ENCODE measurements at regions of chr20 and their contacts with region 1.

Region 1: DNA sequence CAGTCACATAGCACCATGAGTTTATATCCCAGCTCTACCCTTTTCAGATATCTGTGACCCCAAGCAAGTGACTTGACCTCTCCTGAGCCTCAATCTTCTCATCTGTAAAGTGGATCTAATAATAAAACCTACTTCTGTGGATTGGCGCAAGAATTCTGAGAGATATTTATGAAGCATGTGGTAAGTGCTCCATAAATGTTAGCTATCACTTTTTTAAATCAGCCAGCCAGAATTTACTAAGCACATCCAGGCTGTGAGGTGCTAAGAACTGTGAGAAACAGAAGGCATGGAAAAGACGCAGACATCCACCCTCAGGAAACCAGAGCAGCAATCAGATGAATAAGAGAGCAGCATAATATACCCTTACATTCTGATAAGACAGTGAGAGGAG is 862 bp downstream of the C20orf96 start:
- DNase-seq: no peak
- H3K4me3 ChIP-seq: peak overlapping the region; percentile 66
- H3K27ac ChIP-seq: peak overlapping the region in 1 of 2 donors; percentile 11
- H3K4me1 ChIP-seq: no peaks in the 10 kb centered on the region
- H3K27me3 ChIP-seq: no peaks in the 10 kb centered on the region
- CTCF ChIP-seq: no peak
- EP300 ChIP-seq: no peak
- POLR2A ChIP-seq: no peak

Region 2: DNA sequence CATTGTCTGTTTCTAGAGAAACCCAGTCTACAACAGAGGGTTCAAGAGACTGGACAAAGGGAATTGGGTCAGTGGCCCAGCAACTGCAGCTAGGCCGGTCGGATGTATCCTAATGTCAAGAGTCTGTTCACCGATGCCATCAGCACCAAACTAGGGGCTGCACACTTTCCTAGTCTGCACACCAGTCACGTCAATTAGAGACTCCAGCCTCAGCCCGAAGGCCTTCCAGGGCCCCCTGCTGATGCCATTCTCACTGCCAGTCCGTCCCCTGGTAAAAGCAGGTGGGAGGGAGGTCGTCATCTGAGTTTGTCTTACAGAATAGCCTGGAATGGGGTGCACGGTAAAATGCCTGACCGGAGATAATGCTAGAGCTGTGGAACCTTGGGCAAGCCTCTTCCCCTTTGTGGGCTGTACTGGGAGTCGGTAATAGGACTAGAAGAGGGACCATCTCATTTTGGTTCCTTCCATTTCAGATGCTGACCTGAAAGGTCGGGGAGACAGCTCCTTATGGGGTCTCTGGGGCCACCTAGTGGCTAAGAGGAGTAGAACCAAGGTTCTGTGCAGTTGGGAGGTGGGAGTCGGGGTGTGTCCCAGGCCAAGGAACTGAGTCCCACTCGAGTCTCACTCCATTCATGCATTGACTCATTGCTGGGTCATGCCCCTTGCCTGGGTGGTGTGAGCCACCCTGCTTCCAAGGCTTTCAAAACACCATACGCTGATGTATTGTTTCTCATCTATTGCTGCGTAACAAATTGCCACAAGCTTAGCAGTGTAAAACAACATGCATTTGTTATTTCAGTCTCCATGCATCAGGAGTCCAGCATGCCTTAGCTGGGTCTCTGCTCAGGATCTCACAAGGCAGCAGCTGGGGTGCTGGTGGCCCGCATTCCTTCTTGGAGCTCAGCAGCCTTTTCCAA is 40.8 kb after region 1 on chr20:
- intact Hi-C with region 1: loop called in 1 of 4 experiments (anchors 10 kb)
- DNase-seq: peak; percentile 53 to 71 (median 56)
- H3K4me3 ChIP-seq: no peak overlapping the region
- H3K27ac ChIP-seq: no peak overlapping the region
- H3K4me1 ChIP-seq: peaks cover 5% of the 10 kb centered on the region
- H3K27me3 ChIP-seq: no peaks in the 10 kb centered on the region
- CTCF ChIP-seq: peak; percentile 60 to 82 (median 66)
- EP300 ChIP-seq: no peak
- POLR2A ChIP-seq: no peak

Region 3: DNA sequence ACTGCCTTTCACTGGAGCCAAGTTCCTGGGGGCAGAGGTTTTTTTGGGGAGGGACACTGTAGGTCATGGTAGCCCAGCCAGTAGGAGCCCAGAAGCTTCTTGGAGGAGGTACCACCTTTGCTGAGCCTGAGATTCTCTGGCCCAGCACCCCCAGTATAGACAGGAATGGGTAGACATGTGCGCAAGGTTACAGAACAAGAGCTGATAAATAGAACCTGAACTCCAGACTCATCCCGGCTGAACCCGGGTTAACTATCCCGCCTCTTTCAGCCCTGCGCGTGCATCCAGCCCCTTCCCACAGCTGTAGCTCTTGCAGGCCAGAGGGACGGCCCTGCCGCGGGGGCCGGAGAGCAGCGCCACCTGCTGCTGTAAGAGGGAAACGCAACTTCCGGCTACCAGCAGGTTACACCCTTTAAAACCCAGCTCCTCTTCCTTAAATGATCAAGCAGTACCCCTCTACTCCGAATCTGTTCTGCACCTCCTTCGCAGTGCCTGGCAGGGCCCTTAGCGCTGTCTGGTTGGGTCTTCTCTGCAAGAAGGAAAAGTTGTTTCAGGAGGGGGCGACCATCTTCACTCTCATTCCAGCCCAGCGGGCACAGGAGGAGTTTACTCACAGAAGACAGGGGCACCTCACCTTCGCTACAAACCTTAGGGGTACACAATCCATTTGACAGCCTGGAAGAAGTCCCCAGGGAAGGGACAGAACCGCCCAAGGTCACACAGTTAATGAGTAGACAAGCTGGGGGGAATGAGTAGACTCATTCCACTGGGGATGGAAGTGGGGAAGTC is 355.8 kb after region 1 on chr20:
- intact Hi-C with region 1: loop called in 1 of 4 experiments (anchors 10 kb)
- DNase-seq: peak; percentile 58 to 87 (median 72)
- H3K4me3 ChIP-seq: no peak overlapping the region
- H3K27ac ChIP-seq: no peak overlapping the region
- H3K4me1 ChIP-seq: peaks cover 3% of the 10 kb centered on the region
- H3K27me3 ChIP-seq: no peaks in the 10 kb centered on the region
- CTCF ChIP-seq: peak; percentile 73 to 79 (median 79)
- EP300 ChIP-seq: no peak
- POLR2A ChIP-seq: no peak